WTC11 (cell line): ENCODE measurements at regions of chr3 and their contacts with region 1.

Region 1: GRCh38 chr3:184805351-184806038 is 6.5 kb upstream of the VPS8 start:
- DNase-seq: no peak
- ATAC-seq: no peak
- H3K4me3 Mint-ChIP-seq: no peak overlapping the region
- H3K27ac Mint-ChIP-seq: no peak overlapping the region
- H3K4me1 Mint-ChIP-seq: no peaks in the 10 kb centered on the region
- H3K27me3 Mint-ChIP-seq: no peaks in the 10 kb centered on the region
- CTCF ChIP-seq: no peak

Region 2: GRCh38 chr3:184786280-184786941 is 19.1 kb before region 1 on chr3:
- CTCF ChIA-PET with region 1: interaction called, 11 read pairs
- POLR2A ChIA-PET with region 1: no interaction called
- DNase-seq: no peak
- ATAC-seq: no peak
- H3K4me3 Mint-ChIP-seq: no peak overlapping the region
- H3K27ac Mint-ChIP-seq: no peak overlapping the region
- H3K4me1 Mint-ChIP-seq: peaks cover 29% of the 10 kb centered on the region
- H3K27me3 Mint-ChIP-seq: no peaks in the 10 kb centered on the region; the same call in none of the 2 replicates
- CTCF ChIP-seq: no peak

Region 3: GRCh38 chr3:184821034-184821433 is 15.5 kb after region 1 on chr3:
- CTCF ChIA-PET with region 1: no interaction called
- POLR2A ChIA-PET with region 1: no interaction called
- DNase-seq: no peak
- ATAC-seq: no peak
- H3K4me3 Mint-ChIP-seq: no peak overlapping the region
- H3K27ac Mint-ChIP-seq: no peak overlapping the region
- H3K4me1 Mint-ChIP-seq: no peaks in the 10 kb centered on the region
- H3K27me3 Mint-ChIP-seq: no peaks in the 10 kb centered on the region
- CTCF ChIP-seq: no peak

Region 4: DNA sequence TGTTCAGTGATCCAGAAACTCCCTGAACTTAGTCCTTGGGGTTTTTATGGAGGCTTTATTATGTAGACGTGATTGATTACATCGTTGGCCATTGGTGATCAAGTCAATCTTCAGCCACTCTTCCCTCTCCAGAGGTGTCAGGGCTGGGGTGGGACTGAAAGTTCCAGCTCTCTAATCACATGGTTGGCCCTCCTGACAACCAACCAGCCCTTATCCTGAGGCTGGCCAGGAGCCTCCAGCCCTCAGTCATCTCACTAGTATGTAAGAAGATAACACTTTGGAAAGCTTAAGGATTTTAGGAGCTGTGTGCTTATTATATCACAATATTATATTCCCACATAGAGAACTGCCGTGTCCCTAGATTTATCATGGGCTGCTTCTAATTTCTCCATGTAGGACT is 148.8 kb after region 1 on chr3:
- CTCF ChIA-PET with region 1: no interaction called
- POLR2A ChIA-PET with region 1: no interaction called
- DNase-seq: no peak
- ATAC-seq: no peak
- H3K4me3 Mint-ChIP-seq: no peak overlapping the region
- H3K27ac Mint-ChIP-seq: peak overlapping the region; percentile 44; the same call in 1 of the 2 replicates
- H3K4me1 Mint-ChIP-seq: peaks cover 27% of the 10 kb centered on the region
- H3K27me3 Mint-ChIP-seq: no peaks in the 10 kb centered on the region
- CTCF ChIP-seq: no peak